ENCODE measurements at regions of chr2 and their contacts with region 1.

Region 1: DNA sequence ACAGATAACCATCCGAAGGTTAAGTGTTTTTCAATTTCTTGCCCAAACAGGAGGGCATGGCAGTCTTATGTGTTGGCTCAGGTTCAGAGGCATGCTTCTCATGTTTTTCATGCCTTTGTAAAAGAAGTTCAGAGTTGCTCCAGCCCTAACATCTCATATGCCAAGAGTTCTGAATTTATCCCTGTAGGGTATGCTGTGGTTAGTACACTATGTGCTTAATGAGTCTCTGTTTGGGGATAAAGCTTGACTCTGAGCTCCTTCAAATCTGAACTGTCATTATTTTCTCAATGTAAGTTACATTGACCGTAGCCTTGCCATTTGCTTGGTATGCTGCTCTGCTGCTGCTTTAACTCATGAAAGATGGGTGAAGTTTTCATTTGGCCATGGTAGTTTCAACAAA is 67.9 kb upstream of the PNPT1 start:
- DNase-seq: no peak
- ATAC-seq: peak; percentile 35
- H3K4me3 ChIP-seq: no peak overlapping the region
- H3K27ac ChIP-seq: no peak overlapping the region
- H3K4me1 ChIP-seq: no peaks in the 10 kb centered on the region
- H3K27me3 ChIP-seq: no peaks in the 10 kb centered on the region
- CTCF ChIP-seq: no peak
- POLR2A ChIP-seq: no peak

Region 2: GRCh38 chr2:55929476-55929875 is 167.9 kb after region 1 on chr2:
- intact Hi-C with region 1: no loop called
- DNase-seq: no peak
- ATAC-seq: no peak
- H3K4me3 ChIP-seq: no peak overlapping the region
- H3K27ac ChIP-seq: no peak overlapping the region
- H3K4me1 ChIP-seq: no peaks in the 10 kb centered on the region
- H3K27me3 ChIP-seq: no peaks in the 10 kb centered on the region
- CTCF ChIP-seq: no peak
- POLR2A ChIP-seq: no peak

Region 3: GRCh38 chr2:55954306-55955035 is 192.9 kb after region 1 on chr2:
- intact Hi-C with region 1: loop called (anchors 10 kb)
- DNase-seq: peak in 1 of 4 donors; percentile 8
- ATAC-seq: no peak
- H3K4me3 ChIP-seq: no peak overlapping the region
- H3K27ac ChIP-seq: no peak overlapping the region
- H3K4me1 ChIP-seq: peaks cover 15% of the 10 kb centered on the region
- H3K27me3 ChIP-seq: no peaks in the 10 kb centered on the region
- CTCF ChIP-seq: no peak
- POLR2A ChIP-seq: no peak